ENCODE measurements at regions of chr1 and their contacts with region 1.

Region 1: DNA sequence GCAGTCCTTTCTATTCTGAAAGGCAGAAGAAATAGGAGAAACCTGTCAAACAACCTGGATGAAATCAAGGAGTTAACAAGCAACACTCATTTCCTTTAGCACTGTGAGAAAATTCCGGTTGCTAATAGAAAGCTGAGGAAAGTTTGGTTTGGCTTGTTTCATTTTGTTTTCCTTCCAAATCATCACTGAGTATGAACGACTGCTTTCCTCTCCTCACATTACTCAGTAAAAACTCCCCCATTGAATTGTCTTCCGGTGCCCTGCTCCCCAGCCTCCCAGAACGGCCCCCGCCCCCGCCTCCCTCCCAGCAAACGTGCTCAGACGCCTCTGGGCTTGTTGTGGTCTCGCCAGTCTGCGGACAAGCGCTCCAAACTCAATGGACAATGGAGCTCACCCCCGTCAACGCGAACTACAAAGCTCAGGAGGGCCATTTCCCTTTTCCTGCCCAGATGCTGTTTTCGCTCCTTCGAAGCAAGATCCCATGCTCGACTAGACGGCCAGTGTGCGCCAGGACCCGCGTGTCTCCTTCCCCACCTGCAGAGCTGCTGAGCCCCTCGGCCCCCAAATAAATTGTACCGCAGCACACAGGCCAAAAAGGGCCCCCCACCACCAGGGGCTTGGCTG is 747 bp downstream of the STX6 start:
- DNase-seq: peak; percentile 96
- H3K4me3 ChIP-seq: peak overlapping the region; percentile 62 to 84 (median 79)
- H3K27ac ChIP-seq: peak overlapping the region; percentile 80
- H3K4me1 ChIP-seq: peaks cover 13% of the 10 kb centered on the region
- H3K27me3 ChIP-seq: peaks cover 5 to 11% of the 10 kb centered on the region in 2 experiments
- CTCF ChIP-seq: no peak
- POLR2A ChIP-seq: peak; percentile 55

Region 2: GRCh38 chr1:180631766-180632325 is 390.1 kb before region 1 on chr1 and contains the start of gene XPR1:
- CTCF ChIA-PET with region 1: no interaction called
- POLR2A ChIA-PET with region 1: no interaction called
- dilution Hi-C with region 1: no loop called
- intact Hi-C with region 1: loop called (anchors 5 kb)
- DNase-seq: peak; percentile 99
- H3K4me3 ChIP-seq: peak within 1 kb of the TSS; percentile 71 to 90 (median 87)
- H3K27ac ChIP-seq: peak within 1 kb of the TSS; percentile 34
- H3K4me1 ChIP-seq: peaks cover 13% of the 10 kb centered on the region
- H3K27me3 ChIP-seq: peaks cover 3 to 5% of the 10 kb centered on the region in 2 experiments
- CTCF ChIP-seq: peak in 1 of 2 donors; percentile 26
- POLR2A ChIP-seq: peak; percentile 52
- total RNA-seq, gene XPR1: 26.7 and 29.3 TPM in 2 replicates

Region 3: DNA sequence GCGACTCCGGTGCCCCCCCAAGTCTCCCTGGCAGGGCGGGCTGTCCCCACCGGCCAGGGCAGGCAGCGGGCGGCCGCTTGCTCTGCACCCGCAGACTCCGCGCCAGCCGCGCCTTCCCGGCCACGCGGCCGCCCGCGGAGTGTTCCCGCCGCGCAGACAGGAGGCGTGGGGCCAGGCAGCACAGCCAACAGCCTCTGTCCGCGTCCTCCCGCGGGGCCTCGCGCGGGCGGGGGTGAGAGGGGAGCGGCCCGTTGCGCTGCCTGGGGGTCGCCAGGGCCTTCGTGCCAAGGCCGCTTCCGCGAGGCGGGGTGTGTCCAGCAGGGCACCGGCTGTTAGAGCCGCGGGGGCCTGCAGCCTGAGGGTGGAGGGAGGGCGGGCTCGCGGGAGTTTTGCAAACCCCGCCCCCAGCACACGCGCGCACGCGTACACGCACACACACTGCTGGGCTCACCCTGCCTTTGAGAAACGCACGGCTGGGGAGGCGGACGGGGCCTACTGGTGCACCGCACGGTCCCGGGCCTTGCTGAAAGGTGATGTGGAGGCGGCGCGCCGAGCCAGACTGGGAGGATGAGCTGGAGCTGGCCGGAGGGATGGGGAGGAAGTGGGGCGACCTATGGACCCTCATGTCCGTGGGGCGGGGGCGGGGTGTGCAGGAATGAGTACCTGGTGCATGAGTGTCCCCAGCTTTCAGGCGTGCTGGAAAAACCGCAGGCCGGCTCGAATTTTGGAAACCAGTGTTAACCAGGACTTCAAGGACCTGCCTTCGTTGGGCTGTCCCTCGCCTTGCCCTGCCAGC is 67.7 kb before region 1 on chr1:
- CTCF ChIA-PET with region 1: no interaction called
- POLR2A ChIA-PET with region 1: no interaction called
- dilution Hi-C with region 1: no loop called
- intact Hi-C with region 1: loop called (anchors 2 kb)
- DNase-seq: peak; percentile 69
- H3K4me3 ChIP-seq: peak overlapping the region; percentile 30 to 51 (median 40)
- H3K27ac ChIP-seq: no peak overlapping the region
- H3K4me1 ChIP-seq: peaks cover 6% of the 10 kb centered on the region
- H3K27me3 ChIP-seq: no peaks in the 10 kb centered on the region
- CTCF ChIP-seq: no peak
- POLR2A ChIP-seq: no peak

Region 4: DNA sequence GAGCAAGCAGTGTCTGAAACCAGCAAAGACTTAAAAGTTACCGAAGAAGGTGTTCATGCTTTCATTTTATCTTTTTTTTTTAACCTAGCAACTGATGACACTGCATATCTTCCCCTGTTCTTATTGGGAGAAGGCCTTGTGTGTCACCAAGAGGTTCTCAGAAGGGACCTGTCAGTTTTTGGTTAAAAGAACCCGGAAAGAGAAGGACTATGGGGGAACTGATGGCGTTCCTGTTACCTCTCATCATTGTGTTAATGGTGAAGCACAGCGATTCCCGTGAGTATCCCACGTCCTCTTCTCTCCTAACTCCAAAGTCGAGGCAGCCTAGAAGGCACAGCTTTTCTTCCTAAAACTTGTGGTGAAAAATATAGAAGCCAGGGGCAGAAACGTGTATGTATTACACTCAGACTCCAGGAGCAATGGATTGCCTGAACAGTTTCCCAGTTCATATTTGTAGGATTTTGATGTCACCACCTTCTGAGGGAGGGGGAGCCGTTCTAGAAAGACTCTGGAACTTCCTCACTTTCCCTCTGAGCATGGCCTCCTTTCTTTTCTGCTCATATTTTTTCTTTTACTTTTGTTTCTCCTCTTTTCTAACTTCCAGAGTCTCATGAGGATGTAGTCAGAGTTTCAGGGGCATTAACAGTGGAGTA is 12.0 kb after region 1 on chr1 and contains the start of gene MR1:
- CTCF ChIA-PET with region 1: interaction called, 18 read pairs
- POLR2A ChIA-PET with region 1: interaction called, 10 read pairs
- dilution Hi-C with region 1: no loop called
- intact Hi-C with region 1: no loop called
- DNase-seq: peak; percentile 91
- H3K4me3 ChIP-seq: peak within 1 kb of the TSS in 2 of 3 experiments; percentile 1 to 43
- H3K27ac ChIP-seq: peak within 1 kb of the TSS; percentile 18
- H3K4me1 ChIP-seq: peaks cover 10% of the 10 kb centered on the region
- H3K27me3 ChIP-seq: no peaks in the 10 kb centered on the region
- CTCF ChIP-seq: no peak
- POLR2A ChIP-seq: no peak
- total RNA-seq, gene MR1: 1.1 and 1.3 TPM in 2 replicates

Region 5: DNA sequence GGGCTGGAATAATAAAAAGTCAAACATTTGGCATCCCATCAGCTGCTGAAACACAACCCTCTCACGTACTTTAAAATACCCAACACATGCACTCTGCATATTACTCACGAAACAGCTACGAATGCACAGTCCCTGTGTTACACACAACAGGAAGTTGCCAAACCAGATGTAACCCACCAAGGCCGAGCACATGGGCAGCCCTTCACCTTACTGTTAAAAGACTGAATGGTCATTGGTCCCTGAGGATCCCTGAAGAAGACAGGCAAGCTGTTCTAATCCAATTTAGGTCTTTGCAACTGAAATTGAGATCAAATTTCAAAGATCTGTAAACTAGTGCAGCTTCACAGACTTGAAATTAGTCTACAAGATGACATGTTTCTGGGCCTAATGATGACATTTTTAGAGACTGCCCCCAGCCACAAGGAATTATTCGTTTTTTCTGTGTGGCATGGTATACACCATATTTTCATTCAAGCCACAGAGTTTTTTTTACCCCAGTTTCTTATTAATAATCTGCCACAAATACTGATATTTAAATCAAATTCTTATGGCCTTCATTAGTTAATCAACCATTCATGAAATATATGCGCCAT is 41.0 kb after region 1 on chr1:
- CTCF ChIA-PET with region 1: no interaction called
- POLR2A ChIA-PET with region 1: no interaction called
- dilution Hi-C with region 1: no loop called
- intact Hi-C with region 1: no loop called
- DNase-seq: no peak
- H3K4me3 ChIP-seq: no peak overlapping the region
- H3K27ac ChIP-seq: no peak overlapping the region
- H3K4me1 ChIP-seq: no peaks in the 10 kb centered on the region
- H3K27me3 ChIP-seq: peaks cover 10 to 16% of the 10 kb centered on the region in 2 experiments
- CTCF ChIP-seq: no peak
- POLR2A ChIP-seq: no peak

Region 6: DNA sequence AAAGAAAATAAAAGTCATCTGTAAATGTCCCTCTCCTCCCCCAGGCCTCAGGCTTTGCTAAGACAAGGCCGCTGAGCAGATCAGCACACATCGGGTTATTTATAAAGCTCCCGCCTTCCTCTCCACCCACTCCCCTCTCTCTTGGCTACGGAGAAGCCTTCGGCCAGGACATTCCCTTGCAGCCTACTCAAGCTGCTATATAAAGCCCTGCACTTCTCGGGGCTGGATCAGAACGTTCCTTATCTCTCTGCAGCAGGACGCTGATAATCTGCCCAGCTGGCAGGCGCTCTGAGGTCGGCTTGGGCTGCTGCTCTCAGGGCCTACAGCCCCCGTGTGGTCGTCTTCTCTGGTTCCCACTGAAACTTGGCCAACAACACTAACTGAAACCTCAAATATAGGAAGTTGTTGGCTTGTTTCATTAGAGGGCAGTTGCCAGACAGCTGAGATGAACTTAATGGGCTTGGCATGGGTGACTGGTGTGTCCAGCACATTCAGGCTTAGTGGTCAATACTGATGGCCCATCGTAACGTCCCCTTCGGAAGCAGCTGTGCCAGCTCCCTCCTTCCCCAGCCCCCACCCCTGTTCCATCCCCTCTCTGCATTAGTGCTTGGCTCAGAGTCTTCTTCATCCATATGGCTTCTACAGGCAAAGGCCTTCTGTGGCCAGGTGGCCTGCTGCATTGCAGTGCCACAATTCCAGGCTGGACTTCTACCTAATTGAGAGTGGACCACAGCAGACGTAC is 131.1 kb after region 1 on chr1:
- CTCF ChIA-PET with region 1: no interaction called
- POLR2A ChIA-PET with region 1: interaction called, 4 read pairs
- dilution Hi-C with region 1: no loop called
- intact Hi-C with region 1: loop called (anchors 1 kb)
- DNase-seq: peak; percentile 98
- H3K4me3 ChIP-seq: no peak overlapping the region
- H3K27ac ChIP-seq: no peak overlapping the region
- H3K4me1 ChIP-seq: peaks cover 7% of the 10 kb centered on the region
- H3K27me3 ChIP-seq: no peaks in the 10 kb centered on the region
- CTCF ChIP-seq: peak; percentile 31 to 72
- POLR2A ChIP-seq: no peak

Region 7: GRCh38 chr1:181397845-181398244 is 375.9 kb after region 1 on chr1:
- CTCF ChIA-PET with region 1: no interaction called
- POLR2A ChIA-PET with region 1: no interaction called
- dilution Hi-C with region 1: no loop called
- intact Hi-C with region 1: no loop called
- DNase-seq: no peak
- H3K4me3 ChIP-seq: no peak overlapping the region
- H3K27ac ChIP-seq: no peak overlapping the region
- H3K4me1 ChIP-seq: no peaks in the 10 kb centered on the region
- H3K27me3 ChIP-seq: no peaks in the 10 kb centered on the region
- CTCF ChIP-seq: no peak
- POLR2A ChIP-seq: no peak

Measured in endothelial cell of umbilical vein (primary cell).